HEK293T (cell line): ENCODE measurements at regions of chr1 and their contacts with region 1.

Region 1: GRCh38 chr1:155167166-155168104 is 5.7 kb downstream of the KRTCAP2 start:
- DNase-seq: peak; percentile 90

Region 2: GRCh38 chr1:155127105-155127964 is 40.1 kb before region 1 on chr1 and contains the start of gene EFNA1:
- CTCF ChIA-PET with region 1: interaction called, 10 read pairs
- POLR2A ChIA-PET with region 1: interaction called, 10 read pairs
- DNase-seq: peak; percentile 71

Region 3: DNA sequence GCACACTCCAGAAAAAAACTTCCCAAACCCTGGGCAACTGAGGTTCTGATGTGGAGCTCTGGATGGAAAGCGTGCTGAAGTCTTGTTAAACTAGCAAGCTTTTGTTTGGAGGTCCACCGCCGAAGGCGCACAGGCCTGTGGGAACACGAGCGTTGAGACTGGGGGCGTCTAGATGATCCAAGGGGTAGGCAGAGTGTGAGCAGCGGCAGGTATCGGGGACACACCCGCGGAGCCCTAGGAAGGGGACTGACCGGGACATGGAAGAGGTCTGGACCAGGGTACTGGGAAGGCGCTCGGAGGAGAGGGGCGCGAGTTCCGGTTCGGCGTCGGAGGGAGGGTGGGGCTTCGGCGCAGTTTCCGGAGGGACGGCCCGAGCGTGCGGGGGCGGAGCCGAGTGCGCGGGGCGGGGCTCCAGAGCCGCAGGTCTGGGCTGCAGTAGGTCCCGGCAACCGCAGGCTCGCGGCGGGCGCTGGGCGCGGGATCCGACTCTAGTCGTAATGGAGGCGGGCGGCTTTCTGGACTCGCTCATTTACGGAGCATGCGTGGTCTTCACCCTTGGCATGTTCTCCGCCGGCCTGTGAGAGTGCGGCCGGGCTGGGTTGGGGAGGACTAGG is 31.9 kb before region 1 on chr1 and contains the start of gene SLC50A1:
- CTCF ChIA-PET with region 1: interaction called, 6 read pairs
- POLR2A ChIA-PET with region 1: interaction called, 17 read pairs
- DNase-seq: peak; percentile 99